ENCODE measurements at regions of chr6 and their contacts with region 1.

Region 1: DNA sequence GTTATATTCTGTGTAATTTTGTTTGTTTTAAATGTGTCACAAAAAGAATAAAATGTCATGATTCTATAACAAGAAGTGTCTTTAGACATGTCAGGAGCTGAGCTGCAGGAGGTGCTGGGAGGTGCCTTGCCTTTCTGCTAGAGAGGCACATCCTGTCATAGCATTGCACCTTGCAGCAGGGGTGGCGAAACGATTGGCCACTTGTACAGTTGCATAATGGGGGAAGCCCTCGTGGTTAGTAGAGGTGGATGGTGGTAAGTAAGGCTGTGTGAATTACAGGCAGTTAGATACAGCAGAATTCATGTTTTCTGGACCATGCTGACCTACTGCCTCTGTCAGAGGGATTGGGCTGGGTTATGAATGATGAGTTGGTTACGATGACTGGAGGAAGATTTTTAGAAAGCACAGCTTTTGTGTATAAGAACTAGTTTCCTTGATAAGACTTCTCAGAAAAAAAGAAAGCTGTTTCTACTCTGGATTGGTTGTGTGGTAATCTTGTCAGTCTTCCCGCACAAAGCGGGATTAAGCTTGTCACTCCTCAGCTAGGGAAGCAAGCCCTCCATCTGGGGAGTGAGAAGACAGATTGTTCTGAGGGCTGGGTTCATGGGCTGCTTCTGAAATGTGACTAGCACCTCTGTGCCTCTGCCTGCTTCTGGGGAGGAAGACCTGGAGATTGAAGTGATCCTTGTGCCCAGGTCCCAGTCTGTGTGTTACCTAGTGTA is 74.9 kb downstream of the FOXO3 start:
- DNase-seq: peak; percentile 76
- ATAC-seq: peak; percentile 93
- H3K4me3 Mint-ChIP-seq: no peak overlapping the region
- H3K27ac Mint-ChIP-seq: peak overlapping the region; percentile 7
- H3K4me1 Mint-ChIP-seq: peaks cover 61% of the 10 kb centered on the region
- H3K27me3 Mint-ChIP-seq: no peaks in the 10 kb centered on the region
- CTCF ChIP-seq: no peak

Region 2: DNA sequence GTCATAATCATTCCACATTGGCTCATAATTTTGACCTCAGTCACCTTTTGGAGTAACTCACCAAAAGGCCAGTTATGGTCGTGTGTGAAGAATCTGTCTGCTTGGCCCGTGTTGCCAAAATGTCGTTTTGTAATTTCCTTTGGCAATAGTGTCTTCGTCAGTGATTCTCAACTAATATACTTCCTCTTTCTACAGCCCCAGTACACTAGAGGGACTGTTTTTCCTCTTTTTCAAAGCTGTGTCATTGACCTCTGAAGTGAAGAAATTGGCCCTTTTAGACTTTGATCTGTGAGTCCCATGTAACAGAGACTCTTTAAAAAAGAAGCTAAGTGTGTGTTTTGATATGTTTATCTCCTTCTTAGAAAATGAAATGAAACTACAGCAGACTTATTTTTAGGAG is 69.8 kb before region 1 on chr6:
- CTCF ChIA-PET with region 1: no interaction called
- POLR2A ChIA-PET with region 1: no interaction called
- intact Hi-C with region 1: loop called (anchors 5 kb)
- DNase-seq: no peak
- ATAC-seq: no peak
- H3K4me3 Mint-ChIP-seq: no peak overlapping the region
- H3K27ac Mint-ChIP-seq: peak overlapping the region; percentile 75
- H3K4me1 Mint-ChIP-seq: peaks cover 61% of the 10 kb centered on the region
- H3K27me3 Mint-ChIP-seq: peaks cover 1% of the 10 kb centered on the region
- CTCF ChIP-seq: no peak